ENCODE measurements at regions of chr20 and their contacts with region 1.

Region 1: GRCh38 chr20:5845681-5846615 is 95.7 kb downstream of the SHLD1 start:
- DNase-seq: no peak
- H3K4me3 Mint-ChIP-seq: no peak overlapping the region
- H3K27ac Mint-ChIP-seq: no peak overlapping the region
- H3K4me1 Mint-ChIP-seq: peaks cover 48% of the 10 kb centered on the region
- H3K27me3 Mint-ChIP-seq: no peaks in the 10 kb centered on the region

Region 2: GRCh38 chr20:5608442-5609161 is 237.3 kb before region 1 on chr20:
- CTCF ChIA-PET with region 1: no interaction called
- POLR2A ChIA-PET with region 1: interaction called, 14 read pairs
- DNase-seq: no peak
- H3K4me3 Mint-ChIP-seq: peak overlapping the region; percentile 96
- H3K27ac Mint-ChIP-seq: peak overlapping the region; percentile 100
- H3K4me1 Mint-ChIP-seq: peaks cover 57% of the 10 kb centered on the region
- H3K27me3 Mint-ChIP-seq: no peaks in the 10 kb centered on the region

Region 3: DNA sequence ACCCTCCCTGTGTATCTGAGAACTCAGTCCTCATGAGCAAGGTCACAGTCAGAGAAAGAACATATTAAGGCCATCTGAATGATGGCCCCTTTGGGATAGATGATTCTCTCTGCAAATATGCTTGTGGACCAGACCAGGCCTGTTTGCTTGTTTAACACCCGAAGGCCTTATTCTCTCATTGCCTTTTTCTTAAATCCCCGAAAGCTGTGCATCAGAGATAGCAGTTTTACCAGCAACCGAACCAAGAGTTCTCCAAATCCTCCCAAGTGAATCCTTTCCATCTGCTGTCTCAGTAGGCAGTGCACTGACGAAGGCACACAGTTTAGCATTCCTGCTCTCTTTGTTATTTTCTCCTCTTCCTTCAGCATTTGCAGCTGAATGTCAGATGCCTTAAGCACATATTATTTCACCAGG is 24.6 kb after region 1 on chr20:
- CTCF ChIA-PET with region 1: no interaction called
- POLR2A ChIA-PET with region 1: no interaction called
- DNase-seq: no peak
- H3K4me3 Mint-ChIP-seq: no peak overlapping the region
- H3K27ac Mint-ChIP-seq: no peak overlapping the region
- H3K4me1 Mint-ChIP-seq: no peaks in the 10 kb centered on the region
- H3K27me3 Mint-ChIP-seq: peaks cover 4% of the 10 kb centered on the region

Measured in activated CD4-positive, alpha-beta T cell treated with anti-CD3 and anti-CD28 coated beads, Interleukin-2, amount 10 ng/mL, durations not matched to agents 7 days and 5 days (primary cell).